Activated naive CD4-positive, alpha-beta T cell treated with anti-CD3 and anti-CD28 coated beads for 36 hours (primary cell): ENCODE measurements at regions of chr21 and their contacts with region 1.

Region 1: GRCh38 chr21:44572966-44573583 is 454 bp upstream of the KRTAP10-4 start:
- DNase-seq: no peak
- H3K4me3 Mint-ChIP-seq: no peak overlapping the region
- H3K27ac Mint-ChIP-seq: no peak overlapping the region
- H3K4me1 Mint-ChIP-seq: no peaks in the 10 kb centered on the region
- H3K27me3 Mint-ChIP-seq: no peaks in the 10 kb centered on the region

Region 2: DNA sequence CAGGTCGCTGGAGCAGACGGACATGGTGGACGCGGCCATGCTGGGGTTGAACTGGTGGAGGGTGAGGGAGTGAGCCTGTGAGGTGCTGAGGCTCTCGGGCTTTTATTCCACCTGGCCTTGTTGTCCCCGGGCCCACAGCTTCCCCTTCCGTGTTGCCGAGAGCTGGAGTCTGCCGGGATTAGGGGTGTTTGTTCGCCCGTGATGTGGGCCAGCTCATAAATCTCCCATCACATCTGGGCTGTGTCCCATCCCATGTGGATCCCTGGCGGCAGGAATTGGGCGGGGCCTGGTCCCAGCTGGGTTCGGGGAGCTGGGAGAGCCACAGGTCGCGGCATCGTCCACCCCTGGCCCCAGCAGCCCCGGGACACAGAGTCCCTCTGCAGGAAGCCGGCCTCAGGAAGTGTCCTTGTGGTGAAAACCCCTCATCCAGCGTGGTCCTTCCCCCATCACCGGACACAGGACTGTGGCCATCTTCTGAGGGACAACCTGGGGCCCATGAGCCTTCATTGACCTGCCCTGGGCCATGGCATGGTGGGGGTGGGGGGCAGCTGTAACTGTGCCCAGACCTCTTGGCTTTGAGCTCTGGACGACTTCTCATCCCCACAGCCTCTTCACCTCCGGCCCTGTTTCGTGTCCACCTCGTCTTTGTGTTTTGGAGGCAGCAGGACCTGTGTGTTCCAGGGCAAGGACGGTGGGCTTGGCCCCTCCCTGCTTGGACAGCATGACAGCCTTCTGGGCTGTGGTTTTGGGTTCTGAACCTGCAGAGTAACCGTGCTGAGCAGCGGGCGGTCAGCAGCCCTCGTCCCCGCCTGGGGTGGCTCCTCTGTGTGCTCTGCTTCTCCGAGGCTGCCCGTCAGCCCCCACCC is 19.6 kb after region 1 on chr21 and contains the start of gene KRTAP10-6:
- CTCF ChIA-PET with region 1: no interaction called
- intact Hi-C with region 1: loop called (anchors 1 kb)
- DNase-seq: no peak
- H3K4me3 Mint-ChIP-seq: no peak within 1 kb of the TSS
- H3K27ac Mint-ChIP-seq: no peak within 1 kb of the TSS
- H3K4me1 Mint-ChIP-seq: no peaks in the 10 kb centered on the region
- H3K27me3 Mint-ChIP-seq: no peaks in the 10 kb centered on the region
- total RNA-seq, gene KRTAP10-6: not detected